Activated T-helper 1 cell treated with anti-CD3 and anti-CD28 coated beads, Interleukin-12 subunit alpha, Interleukin-12 subunit beta, Interleukin-2, Interleukin-4 antibody, amounts not matched to agents 30 ng/mL and 10 ng/mL and 1 ng/mL, durations not matched to agents 14 hours and 24 hours and 36 hours (primary cell): ENCODE measurements at regions of chr14 and their contacts with region 1.

Region 1: DNA sequence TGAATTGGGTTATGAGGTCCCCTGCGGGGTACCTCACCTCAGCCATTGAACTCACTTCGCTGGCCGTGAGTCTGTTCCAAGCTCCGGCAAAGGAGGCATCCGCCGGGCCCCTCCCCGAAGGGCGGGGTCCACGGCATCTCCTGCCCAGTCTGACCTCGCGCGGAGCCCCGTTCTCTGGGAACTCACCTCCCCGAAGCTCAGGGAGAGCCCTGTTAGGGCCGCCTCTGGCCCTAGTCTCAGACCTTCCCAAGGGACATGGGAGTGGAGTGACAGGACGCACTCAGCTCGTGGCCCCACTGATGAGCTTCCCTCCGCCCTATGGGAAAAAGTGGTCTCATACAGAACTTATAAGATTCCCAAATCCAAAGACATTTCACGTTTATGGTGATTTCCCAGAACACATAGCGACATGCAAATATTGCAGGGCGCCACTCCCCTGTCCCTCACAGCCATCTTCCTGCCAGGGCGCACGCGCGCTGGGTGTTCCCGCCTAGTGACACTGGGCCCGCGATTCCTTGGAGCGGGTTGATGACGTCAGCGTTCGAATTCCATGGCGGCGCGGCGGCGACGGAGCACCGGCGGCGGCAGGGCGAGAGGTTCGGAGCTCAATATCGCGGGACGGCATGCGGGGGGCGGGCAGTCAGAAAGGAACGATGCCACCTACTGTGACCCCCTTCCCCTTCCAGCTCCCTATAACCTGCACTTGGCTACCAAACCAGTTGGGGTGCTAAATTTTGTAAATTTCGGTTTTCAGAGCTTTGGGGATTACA is at the start of gene PARP2:
- DNase-seq: peak; percentile 92
- H3K4me3 Mint-ChIP-seq: peak within 1 kb of the TSS; percentile 95
- H3K27ac Mint-ChIP-seq: peak within 1 kb of the TSS; percentile 96
- H3K4me1 Mint-ChIP-seq: peaks cover 19% of the 10 kb centered on the region
- H3K27me3 Mint-ChIP-seq: peaks cover 6% of the 10 kb centered on the region
- total RNA-seq, gene PARP2: 32.5 and 36.6 TPM in 2 replicates

Region 2: GRCh38 chr14:20195911-20196310 is 147.4 kb before region 1 on chr14:
- intact Hi-C with region 1: no loop called
- DNase-seq: no peak
- H3K4me3 Mint-ChIP-seq: no peak overlapping the region
- H3K27ac Mint-ChIP-seq: no peak overlapping the region
- H3K4me1 Mint-ChIP-seq: no peaks in the 10 kb centered on the region
- H3K27me3 Mint-ChIP-seq: peaks cover 4% of the 10 kb centered on the region

Region 3: DNA sequence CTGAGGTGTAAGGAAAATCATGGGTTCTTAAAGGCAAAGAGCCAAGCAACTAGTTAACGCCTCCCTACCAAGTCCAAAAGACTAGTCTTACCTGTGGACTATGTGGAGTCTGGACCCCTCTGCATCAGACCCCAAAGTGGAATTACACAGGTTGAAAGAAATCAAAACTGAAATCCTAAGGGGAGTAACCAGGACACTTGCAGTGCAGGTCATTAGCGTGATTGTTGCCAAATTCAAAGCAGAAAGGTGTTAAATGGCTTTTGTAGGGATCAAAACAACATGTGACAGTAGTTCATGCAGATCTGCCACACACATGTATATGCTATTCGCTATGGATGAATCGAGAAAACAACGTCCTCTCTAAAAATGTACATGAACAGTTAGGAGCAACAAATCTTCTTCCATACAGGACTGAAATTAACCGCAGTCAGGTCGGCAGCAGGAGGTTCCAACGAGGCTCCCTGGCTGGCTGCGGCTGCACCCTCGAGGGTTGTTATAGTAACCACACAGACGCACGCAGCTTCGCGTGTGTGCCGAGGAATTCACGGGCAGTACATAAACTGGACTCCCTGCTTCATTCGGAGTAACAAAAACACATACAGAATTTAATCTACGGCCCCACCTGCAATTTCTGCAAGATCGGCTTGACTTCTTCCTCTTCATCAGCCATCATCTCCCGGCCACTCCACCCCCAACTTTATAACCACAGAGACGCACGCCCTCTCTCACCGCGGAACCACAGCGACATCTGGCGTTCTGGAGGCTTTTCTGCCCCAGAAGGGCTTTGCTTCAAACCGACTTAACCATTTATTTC is 37.8 kb before region 1 on chr14 and contains the start of gene TTC5:
- intact Hi-C with region 1: loop called (anchors 1 kb)
- DNase-seq: peak; percentile 85
- H3K4me3 Mint-ChIP-seq: peak within 1 kb of the TSS; percentile 96
- H3K27ac Mint-ChIP-seq: peak within 1 kb of the TSS; percentile 94
- H3K4me1 Mint-ChIP-seq: peaks cover 25% of the 10 kb centered on the region
- H3K27me3 Mint-ChIP-seq: no peaks in the 10 kb centered on the region
- total RNA-seq, gene TTC5: 33.0 and 33.7 TPM in 2 replicates

Region 4: GRCh38 chr14:20332788-20333493 is 10.3 kb before region 1 on chr14 and contains the start of gene CCNB1IP1:
- intact Hi-C with region 1: loop called (anchors 1 kb)
- DNase-seq: peak; percentile 62
- H3K4me3 Mint-ChIP-seq: peak within 1 kb of the TSS; percentile 98
- H3K27ac Mint-ChIP-seq: peak within 1 kb of the TSS; percentile 91
- H3K4me1 Mint-ChIP-seq: peaks cover 59% of the 10 kb centered on the region
- H3K27me3 Mint-ChIP-seq: peaks cover 5% of the 10 kb centered on the region
- total RNA-seq, gene CCNB1IP1: 61.2 and 72.5 TPM in 2 replicates

Region 5: GRCh38 chr14:20413045-20413799 is 69.9 kb after region 1 on chr14 and contains the start of gene TEP1:
- intact Hi-C with region 1: loop called (anchors 1 kb)
- DNase-seq: peak; percentile 69
- H3K4me3 Mint-ChIP-seq: peak within 1 kb of the TSS; percentile 100
- H3K27ac Mint-ChIP-seq: peak within 1 kb of the TSS; percentile 99
- H3K4me1 Mint-ChIP-seq: peaks cover 40% of the 10 kb centered on the region
- H3K27me3 Mint-ChIP-seq: no peaks in the 10 kb centered on the region
- total RNA-seq, gene TEP1: 39.3 and 41.9 TPM in 2 replicates

Region 6: GRCh38 chr14:20461274-20462001 is 118.2 kb after region 1 on chr14 and contains the start of gene PIP4P1:
- intact Hi-C with region 1: loop called (anchors 1 kb)
- DNase-seq: peak; percentile 99
- H3K4me3 Mint-ChIP-seq: peak within 1 kb of the TSS; percentile 94
- H3K27ac Mint-ChIP-seq: peak within 1 kb of the TSS; percentile 87
- H3K4me1 Mint-ChIP-seq: peaks cover 23% of the 10 kb centered on the region
- H3K27me3 Mint-ChIP-seq: no peaks in the 10 kb centered on the region
- total RNA-seq, gene PIP4P1: 36.6 and 37.0 TPM in 2 replicates

Region 7: GRCh38 chr14:20632682-20633428 is 289.6 kb after region 1 on chr14:
- intact Hi-C with region 1: loop called (anchors 5 kb)
- DNase-seq: peak; percentile 53
- H3K4me3 Mint-ChIP-seq: peak overlapping the region; percentile 85
- H3K27ac Mint-ChIP-seq: peak overlapping the region; percentile 91
- H3K4me1 Mint-ChIP-seq: peaks cover 56% of the 10 kb centered on the region
- H3K27me3 Mint-ChIP-seq: peaks cover 76% of the 10 kb centered on the region